Adrenal gland (tissue), 19 donors: ENCODE measurements at regions of chr2 and their contacts with region 1.

Region 1: DNA sequence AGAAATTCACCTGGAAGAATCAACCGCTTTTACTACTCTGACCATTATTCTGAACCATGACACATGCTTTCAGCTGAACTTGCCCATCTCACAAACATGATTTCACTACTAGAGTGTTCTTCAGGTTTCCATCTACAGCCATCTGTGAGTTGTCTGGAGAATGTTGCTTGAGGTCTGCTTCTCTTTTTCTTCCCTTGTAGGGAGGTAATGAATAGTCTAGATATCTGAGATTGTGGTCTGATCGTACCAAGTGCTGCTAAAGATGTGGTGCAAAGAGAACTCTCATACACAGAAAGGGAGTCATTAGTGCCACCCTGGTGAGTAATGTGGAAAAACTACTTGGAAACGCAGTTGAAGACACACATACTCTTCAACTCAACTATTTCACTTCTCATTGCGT is 10.2 kb downstream of the SOWAHC start:
- DNase-seq: no peak
- H3K4me3 ChIP-seq: no peak overlapping the region
- H3K27ac ChIP-seq: no peak overlapping the region
- H3K4me1 ChIP-seq: no peaks in the 10 kb centered on the region
- H3K27me3 ChIP-seq: no peaks in the 10 kb centered on the region
- CTCF ChIP-seq: no peak
- POLR2A ChIP-seq: no peak

Region 2: GRCh38 chr2:108833219-108833618 is 791.1 kb before region 1 on chr2:
- intact Hi-C with region 1: no loop called
- DNase-seq: no peak
- H3K4me3 ChIP-seq: no peak overlapping the region
- H3K27ac ChIP-seq: no peak overlapping the region
- H3K4me1 ChIP-seq: no peaks in the 10 kb centered on the region
- H3K27me3 ChIP-seq: no peaks in the 10 kb centered on the region
- CTCF ChIP-seq: no peak
- POLR2A ChIP-seq: no peak

Region 3: DNA sequence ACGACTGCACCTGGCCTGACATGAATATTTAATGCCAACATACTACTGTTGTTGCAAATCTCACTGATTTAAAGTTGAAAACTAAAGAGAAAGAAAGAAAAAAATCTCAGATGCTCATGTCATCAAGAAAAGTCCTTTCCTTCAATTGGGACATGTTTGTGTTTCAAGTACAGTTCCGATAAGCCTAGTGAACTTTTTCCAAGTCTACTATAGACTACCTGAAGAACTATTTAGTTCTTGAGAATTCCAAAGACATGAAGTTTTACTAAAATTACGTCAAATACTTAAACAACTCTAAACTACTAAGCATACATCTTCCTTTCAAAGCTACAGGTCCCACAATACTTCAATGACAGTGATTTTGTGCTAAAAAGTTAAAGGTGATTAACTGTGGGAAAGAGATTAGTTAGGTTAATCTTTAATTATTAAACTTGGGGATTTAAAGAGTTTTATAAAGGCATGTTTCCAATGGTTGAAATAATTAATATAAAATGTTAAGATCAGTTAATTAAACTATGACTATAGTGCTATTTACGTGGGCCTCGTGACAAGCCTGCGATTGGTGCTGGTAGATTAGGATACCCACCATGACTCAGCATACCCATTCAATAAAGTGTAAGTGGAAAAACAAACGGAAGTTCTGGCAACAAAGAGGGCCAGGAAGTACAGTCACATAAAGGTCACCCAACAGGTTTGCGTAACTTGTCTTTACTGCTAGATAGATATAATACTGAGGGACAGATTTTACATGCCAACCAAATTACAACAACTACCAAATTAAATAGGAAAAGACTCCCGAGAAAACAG is 66.1 kb before region 1 on chr2:
- intact Hi-C with region 1: loop called in 1 of 2 experiments (anchors 10 kb)
- DNase-seq: peak in 1 of 7 donors; percentile 19
- H3K4me3 ChIP-seq: no peak overlapping the region
- H3K27ac ChIP-seq: no peak overlapping the region
- H3K4me1 ChIP-seq: peaks cover 0 to 11% of the 10 kb centered on the region in 2 donors
- H3K27me3 ChIP-seq: no peaks in the 10 kb centered on the region
- CTCF ChIP-seq: no peak
- POLR2A ChIP-seq: no peak

Region 4: DNA sequence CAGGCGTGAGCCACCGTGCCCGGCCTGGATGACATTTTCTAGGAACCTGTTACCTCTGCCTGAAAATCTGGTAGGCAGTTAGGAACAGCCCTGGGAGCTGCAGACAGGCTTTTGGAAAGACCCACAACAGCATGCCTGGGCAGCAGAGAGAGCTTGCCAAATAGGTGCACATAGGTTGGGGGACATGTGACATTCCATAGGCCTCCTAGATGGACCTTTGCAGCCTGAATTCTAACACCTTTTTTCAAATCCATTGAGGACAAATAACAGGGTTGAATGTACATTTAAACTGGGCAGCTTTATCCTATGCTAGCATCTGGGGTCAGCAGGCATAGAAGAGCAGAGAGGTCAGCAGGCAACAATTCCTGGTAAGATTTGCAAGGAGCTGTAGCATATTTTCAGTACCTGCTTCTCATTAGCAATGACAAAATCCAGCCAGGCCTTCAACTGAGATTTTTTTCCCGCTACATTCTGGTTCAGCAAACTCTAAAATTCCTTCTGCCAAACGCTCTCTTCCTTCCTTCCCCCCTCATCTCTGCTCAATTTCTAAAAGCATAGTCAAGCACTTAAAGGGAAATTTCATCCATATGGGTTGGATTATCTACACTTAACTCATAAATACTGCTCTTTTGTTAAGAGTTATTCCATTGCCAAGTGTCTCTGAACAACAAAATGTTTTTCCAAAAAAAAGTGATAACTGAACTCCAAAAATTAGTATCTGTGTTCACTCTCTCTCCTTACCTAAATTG is 65.0 kb after region 1 on chr2:
- intact Hi-C with region 1: loop called in 1 of 2 experiments (anchors 10 kb)
- DNase-seq: no peak
- H3K4me3 ChIP-seq: no peak overlapping the region
- H3K27ac ChIP-seq: peak overlapping the region in 1 of 5 donors; percentile 86
- H3K4me1 ChIP-seq: peaks cover 13 to 17% of the 10 kb centered on the region in 2 donors
- H3K27me3 ChIP-seq: no peaks in the 10 kb centered on the region
- CTCF ChIP-seq: no peak
- POLR2A ChIP-seq: no peak